IMR-90 (cell line): ENCODE measurements at regions of chr11 and their contacts with region 1.

Region 1: GRCh38 chr11:78188286-78189173 is at the starts of genes KCTD21 and USP35:
- DNase-seq: peak; percentile 96
- ATAC-seq: peak; percentile 95
- H3K4me3 ChIP-seq: peak within 1 kb of the TSS; percentile 94
- H3K27ac ChIP-seq: peak within 1 kb of the TSS; percentile 80
- H3K4me1 ChIP-seq: peaks cover 16% of the 10 kb centered on the region
- H3K27me3 ChIP-seq: no peaks in the 10 kb centered on the region
- CTCF ChIP-seq: no peak
- POLR2A ChIP-seq: peak; percentile 42; the same call in 1 of the 2 replicates
- RAD21 ChIP-seq: no peak
- total RNA-seq, gene KCTD21: 12.2 and 12.5 TPM in 2 replicates
- total RNA-seq, gene USP35: 2.2 and 2.7 TPM in 2 replicates

Region 2: DNA sequence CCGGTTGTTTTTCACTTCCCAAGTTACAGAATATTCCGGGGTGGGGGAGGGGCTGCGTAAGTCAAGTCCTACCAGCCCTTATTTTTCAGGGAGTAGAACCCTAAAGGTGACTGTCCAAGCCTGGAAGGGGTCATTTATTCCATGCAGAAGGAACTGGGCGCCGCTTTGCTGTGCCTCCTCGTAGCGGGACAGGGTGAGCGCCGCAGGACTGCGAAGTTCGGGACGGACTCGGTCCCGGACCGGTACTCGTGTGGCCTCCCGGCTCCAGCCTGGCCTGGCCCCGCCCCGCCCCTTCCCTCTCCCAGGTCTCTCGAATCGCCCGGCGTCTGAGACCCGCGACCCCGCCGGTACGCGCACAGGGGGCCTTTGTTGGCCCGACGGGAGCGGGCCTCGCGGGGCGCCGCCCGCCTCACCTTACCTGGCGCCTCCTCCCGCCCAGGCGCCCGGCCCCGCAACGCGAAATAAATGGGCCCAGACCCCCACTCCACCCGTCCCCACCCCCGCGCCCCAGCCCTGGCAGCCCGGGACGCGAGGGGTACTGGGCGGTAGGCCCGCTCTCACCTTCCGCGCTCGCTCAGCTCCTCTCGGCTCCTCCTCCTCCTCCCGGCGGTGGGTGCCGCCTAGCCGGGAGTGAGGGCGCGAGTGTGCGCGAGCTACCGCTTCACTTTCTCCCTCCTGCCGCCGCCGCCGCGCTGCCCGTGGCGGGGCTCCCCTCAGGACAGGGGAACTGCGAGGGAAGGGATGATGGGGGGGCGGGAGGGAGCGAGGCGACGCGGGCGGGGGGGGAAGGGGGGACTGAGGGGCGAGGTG is 715.3 kb before region 1 on chr11:
- CTCF ChIA-PET with region 1: no interaction called
- POLR2A ChIA-PET with region 1: no interaction called
- dilution Hi-C with region 1: no loop called
- in situ Hi-C with region 1: no loop called
- intact Hi-C with region 1: no loop called
- DNase-seq: no peak
- ATAC-seq: peak; percentile 61
- H3K4me3 ChIP-seq: peak overlapping the region; percentile 48
- H3K27ac ChIP-seq: no peak overlapping the region
- H3K4me1 ChIP-seq: no peaks in the 10 kb centered on the region
- H3K27me3 ChIP-seq: peaks cover 48% of the 10 kb centered on the region
- CTCF ChIP-seq: no peak
- POLR2A ChIP-seq: no peak
- RAD21 ChIP-seq: no peak

Region 3: DNA sequence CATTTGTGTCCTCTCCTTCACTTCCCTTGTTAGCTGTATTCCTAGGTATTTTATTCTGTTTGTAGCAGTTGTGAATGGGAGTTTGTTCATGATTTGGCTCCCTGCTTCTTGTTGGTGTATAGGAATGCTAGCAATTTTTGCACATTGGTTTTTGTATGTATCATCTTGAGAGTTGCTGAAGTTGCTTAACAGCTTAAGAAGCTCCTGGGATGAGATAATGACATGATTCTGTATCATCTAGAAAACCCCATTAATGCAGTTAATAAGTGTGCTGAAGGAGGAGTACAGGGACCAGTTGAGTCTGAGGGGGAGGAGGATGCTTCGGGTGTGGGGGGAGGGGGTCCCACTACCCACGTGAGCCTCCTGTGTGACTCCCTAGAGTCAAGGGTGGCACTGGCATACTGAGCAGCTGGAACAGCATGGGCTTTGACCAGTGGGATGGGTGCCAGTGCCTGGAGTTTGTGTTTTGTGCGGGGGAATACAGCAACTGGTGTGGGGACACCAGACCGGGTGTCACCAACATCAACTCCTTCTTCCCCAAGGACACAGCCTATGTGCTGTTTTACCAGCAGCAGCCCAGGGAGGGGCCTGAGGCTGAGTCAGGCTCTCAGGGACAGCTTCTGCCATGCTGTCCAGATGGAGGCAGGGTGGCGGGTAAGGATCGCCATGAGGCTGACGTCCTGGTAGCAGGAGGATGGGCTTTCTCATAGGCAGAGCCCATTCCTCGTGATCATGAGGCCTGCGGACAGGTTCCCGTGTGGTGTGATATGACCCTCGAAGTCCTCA is 24.2 kb after region 1 on chr11:
- CTCF ChIA-PET with region 1: no interaction called
- POLR2A ChIA-PET with region 1: no interaction called
- dilution Hi-C with region 1: no loop called
- in situ Hi-C with region 1: no loop called
- intact Hi-C with region 1: loop called (anchors 2 kb)
- DNase-seq: peak; percentile 76
- ATAC-seq: peak; percentile 68
- H3K4me3 ChIP-seq: no peak overlapping the region
- H3K27ac ChIP-seq: no peak overlapping the region; the same call in 1 of the 2 replicates
- H3K4me1 ChIP-seq: peaks cover 10% of the 10 kb centered on the region
- H3K27me3 ChIP-seq: no peaks in the 10 kb centered on the region
- CTCF ChIP-seq: no peak
- POLR2A ChIP-seq: no peak
- RAD21 ChIP-seq: no peak